Activated T-helper 2 cell treated with anti-CD3 and anti-CD28 coated beads, Interferon-gamma antibody, Interleukin-2, Interleukin-4, amounts not matched to agents 10 μg/mL and 5 μg/mL and 100 μg/mL, durations not matched to agents 14 hours and 24 hours and 36 hours (primary cell): ENCODE measurements at regions of chr4 and their contacts with region 1.

Region 1: GRCh38 chr4:3106339-3107186 is 32.1 kb downstream of the HTT start:
- DNase-seq: peak; percentile 77
- H3K4me3 Mint-ChIP-seq: no peak overlapping the region
- H3K27ac Mint-ChIP-seq: peak overlapping the region; percentile 46
- H3K4me1 Mint-ChIP-seq: peaks cover 9% of the 10 kb centered on the region
- H3K27me3 Mint-ChIP-seq: no peaks in the 10 kb centered on the region

Region 2: GRCh38 chr4:2995546-2996265 is 110.9 kb before region 1 on chr4:
- intact Hi-C with region 1: no loop called
- DNase-seq: no peak
- H3K4me3 Mint-ChIP-seq: no peak overlapping the region
- H3K27ac Mint-ChIP-seq: no peak overlapping the region
- H3K4me1 Mint-ChIP-seq: no peaks in the 10 kb centered on the region
- H3K27me3 Mint-ChIP-seq: peaks cover 15% of the 10 kb centered on the region

Region 3: DNA sequence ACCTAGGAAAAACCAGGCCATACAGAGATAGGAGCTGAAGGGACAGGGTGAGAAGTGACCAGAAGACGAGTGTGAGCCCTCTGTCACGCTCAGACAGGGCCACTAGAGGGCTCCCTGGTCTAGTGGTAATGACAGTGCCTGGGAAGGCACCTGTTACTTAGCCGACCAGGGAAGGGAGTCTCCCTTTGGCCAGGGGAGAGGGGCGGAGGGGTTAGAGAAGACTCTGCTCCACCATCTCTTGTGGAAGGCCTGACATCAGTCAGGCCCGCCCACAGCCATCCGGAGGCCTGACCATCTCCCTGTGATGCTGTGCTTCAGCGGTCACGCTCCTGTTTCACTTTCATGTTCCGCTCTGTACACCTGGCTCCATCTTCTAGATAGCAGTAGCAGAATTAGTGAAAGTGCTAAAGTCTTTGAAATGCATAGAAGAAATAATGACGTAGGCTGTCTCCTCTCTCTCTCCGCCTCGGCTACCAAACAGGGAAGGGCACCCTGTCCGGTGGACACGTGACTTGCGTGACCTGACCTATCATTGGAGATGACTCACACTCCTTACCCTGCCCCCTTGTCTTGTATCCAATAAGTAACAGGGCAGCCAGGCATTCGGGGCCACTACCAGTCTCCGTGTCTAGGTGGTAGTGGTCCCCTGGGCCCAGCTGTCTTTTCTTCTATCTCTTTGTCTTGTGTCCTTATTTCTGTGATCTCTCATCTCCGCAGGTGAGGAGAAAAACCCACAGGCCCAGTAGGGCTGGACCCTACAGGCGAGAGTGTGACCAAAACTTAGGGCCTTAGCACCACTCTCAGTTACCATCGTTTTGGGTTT is 58.9 kb before region 1 on chr4:
- intact Hi-C with region 1: no loop called
- DNase-seq: peak; percentile 83
- H3K4me3 Mint-ChIP-seq: peak overlapping the region; percentile 9
- H3K27ac Mint-ChIP-seq: peak overlapping the region; percentile 67
- H3K4me1 Mint-ChIP-seq: peaks cover 27% of the 10 kb centered on the region
- H3K27me3 Mint-ChIP-seq: peaks cover 8% of the 10 kb centered on the region

Region 4: DNA sequence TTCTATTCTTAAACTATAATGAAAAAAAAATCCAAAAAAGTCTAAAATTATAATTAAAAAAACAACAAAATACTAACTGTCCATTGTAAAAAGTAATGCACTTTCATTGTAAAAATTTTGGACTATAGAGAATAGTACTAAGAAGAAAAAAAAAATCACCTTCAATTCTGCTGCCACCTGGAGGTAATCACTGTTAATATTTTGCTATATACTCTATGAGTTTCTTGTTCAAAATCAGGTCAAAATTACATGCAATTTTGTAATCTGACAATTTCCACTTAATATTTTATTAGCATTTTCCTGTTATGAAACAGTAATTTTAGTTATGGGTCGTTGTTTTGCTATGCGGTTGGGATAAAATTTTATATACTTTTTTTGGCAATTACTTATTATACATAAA is 29.9 kb after region 1 on chr4:
- intact Hi-C with region 1: loop called (anchors 1 kb)
- DNase-seq: no peak
- H3K4me3 Mint-ChIP-seq: no peak overlapping the region
- H3K27ac Mint-ChIP-seq: no peak overlapping the region
- H3K4me1 Mint-ChIP-seq: no peaks in the 10 kb centered on the region
- H3K27me3 Mint-ChIP-seq: no peaks in the 10 kb centered on the region

Region 5: DNA sequence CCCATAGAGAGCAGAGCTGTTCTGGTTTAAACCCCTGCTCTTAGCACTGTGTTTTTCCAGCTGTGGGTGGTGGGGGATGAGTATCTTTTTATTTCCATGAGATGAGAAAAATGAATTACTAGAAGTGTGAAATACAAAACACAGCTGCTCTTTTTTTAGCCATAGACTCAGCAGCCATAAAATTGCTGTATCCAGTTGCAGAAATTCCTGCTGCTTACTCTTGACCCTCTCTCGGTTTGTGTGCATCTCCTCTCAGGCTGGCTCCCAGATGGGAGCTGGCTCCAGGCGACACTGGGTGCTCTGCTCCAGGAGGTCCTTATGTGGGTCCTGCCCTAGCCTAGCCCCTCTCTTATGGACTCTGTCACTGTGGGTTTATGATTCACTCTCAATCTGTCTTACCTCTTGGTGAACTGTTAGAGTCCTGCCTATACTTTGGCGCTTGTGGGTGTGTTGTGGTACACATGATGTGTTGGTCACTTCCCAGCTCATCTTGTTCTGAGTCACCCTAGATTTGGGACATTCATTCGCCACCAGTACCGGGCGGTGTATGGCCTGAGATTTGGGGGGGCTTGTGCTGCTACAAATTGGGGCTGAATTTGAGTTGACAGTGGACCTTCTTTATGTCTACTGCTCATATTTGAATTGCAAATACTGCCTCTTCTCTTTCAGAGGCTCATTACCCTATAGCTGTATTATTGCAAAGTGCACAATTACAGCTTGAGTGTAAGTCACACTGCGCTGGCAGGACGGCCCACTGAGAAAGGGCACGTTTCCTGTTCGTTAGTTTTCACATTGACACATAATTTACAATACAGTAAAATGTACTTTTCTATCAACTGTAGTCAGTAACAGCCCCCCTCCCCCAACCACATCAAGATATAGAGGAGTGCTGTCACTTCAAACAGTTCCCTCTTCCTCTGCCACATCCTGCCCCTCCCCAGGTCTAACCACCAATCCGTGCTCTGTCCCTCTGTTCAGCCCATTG is 95.4 kb after region 1 on chr4:
- intact Hi-C with region 1: loop called (anchors 1 kb)
- DNase-seq: peak; percentile 80
- H3K4me3 Mint-ChIP-seq: peak overlapping the region; percentile 63
- H3K27ac Mint-ChIP-seq: peak overlapping the region; percentile 99
- H3K4me1 Mint-ChIP-seq: peaks cover 40% of the 10 kb centered on the region
- H3K27me3 Mint-ChIP-seq: no peaks in the 10 kb centered on the region

Region 6: DNA sequence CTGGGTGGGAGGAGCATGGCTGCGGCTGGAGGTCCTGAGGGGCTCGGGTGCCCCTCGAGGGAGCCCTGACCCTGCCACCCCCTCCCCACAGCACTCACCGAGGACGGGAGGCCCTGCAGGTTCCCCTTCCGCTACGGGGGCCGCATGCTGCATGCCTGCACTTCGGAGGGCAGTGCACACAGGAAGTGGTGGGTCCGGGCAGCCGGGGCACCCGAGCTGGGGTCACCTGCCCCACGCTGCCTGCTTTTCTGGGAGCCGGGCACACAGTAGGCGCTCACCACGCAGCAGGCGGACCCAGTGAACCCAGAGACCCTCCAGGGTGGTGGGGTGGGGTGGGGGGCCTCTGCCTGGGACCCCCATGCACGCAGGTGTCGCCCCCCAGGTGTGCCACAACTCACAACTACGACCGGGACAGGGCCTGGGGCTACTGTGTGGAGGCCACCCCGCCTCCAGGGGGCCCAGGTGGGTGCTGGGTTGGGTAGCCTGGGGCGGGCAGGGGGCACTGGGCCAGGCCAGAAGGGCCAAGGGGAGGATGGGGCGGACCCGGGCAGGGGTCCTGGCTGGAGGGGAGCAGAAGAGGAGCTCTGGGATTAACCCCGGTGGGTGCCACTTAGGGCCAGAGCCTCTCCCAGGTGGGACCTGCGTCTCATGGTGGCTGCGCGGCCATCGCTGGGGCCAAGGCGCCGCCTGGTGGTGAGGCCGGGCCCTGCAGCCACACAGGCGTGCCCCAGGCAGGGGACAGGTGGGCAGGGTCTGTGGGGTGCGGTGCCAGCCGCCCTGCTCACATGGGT is 336.6 kb after region 1 on chr4:
- intact Hi-C with region 1: loop called (anchors 2 kb)
- DNase-seq: peak; percentile 51
- H3K4me3 Mint-ChIP-seq: no peak overlapping the region
- H3K27ac Mint-ChIP-seq: no peak overlapping the region
- H3K4me1 Mint-ChIP-seq: no peaks in the 10 kb centered on the region
- H3K27me3 Mint-ChIP-seq: no peaks in the 10 kb centered on the region